ENCODE measurements at regions of chr10 and their contacts with region 1.

Region 1: GRCh38 chr10:74234569-74234968 is 83.5 kb downstream of the ADK start:
- DNase-seq: no peak
- H3K4me3 Mint-ChIP-seq: no peak overlapping the region
- H3K27ac Mint-ChIP-seq: no peak overlapping the region
- H3K4me1 Mint-ChIP-seq: peaks cover 7% of the 10 kb centered on the region
- H3K27me3 Mint-ChIP-seq: no peaks in the 10 kb centered on the region

Region 2: GRCh38 chr10:74120911-74121310 is 113.7 kb before region 1 on chr10:
- CTCF ChIA-PET with region 1: interaction called, 13 read pairs
- DNase-seq: no peak
- H3K4me3 Mint-ChIP-seq: no peak overlapping the region
- H3K27ac Mint-ChIP-seq: no peak overlapping the region
- H3K4me1 Mint-ChIP-seq: no peaks in the 10 kb centered on the region
- H3K27me3 Mint-ChIP-seq: no peaks in the 10 kb centered on the region

Region 3: GRCh38 chr10:74137992-74138391 is 96.6 kb before region 1 on chr10:
- CTCF ChIA-PET with region 1: interaction called, 10 read pairs
- DNase-seq: no peak
- H3K4me3 Mint-ChIP-seq: no peak overlapping the region
- H3K27ac Mint-ChIP-seq: no peak overlapping the region
- H3K4me1 Mint-ChIP-seq: peaks cover 4% of the 10 kb centered on the region
- H3K27me3 Mint-ChIP-seq: no peaks in the 10 kb centered on the region

Measured in activated naive CD4-positive, alpha-beta T cell treated with anti-CD3 and anti-CD28 coated beads, Interleukin-2, amount 10 ng/mL, durations not matched to agents 7 days and 5 days (primary cell).